ENCODE measurements at regions of chrX and their contacts with region 1.

Region 1: DNA sequence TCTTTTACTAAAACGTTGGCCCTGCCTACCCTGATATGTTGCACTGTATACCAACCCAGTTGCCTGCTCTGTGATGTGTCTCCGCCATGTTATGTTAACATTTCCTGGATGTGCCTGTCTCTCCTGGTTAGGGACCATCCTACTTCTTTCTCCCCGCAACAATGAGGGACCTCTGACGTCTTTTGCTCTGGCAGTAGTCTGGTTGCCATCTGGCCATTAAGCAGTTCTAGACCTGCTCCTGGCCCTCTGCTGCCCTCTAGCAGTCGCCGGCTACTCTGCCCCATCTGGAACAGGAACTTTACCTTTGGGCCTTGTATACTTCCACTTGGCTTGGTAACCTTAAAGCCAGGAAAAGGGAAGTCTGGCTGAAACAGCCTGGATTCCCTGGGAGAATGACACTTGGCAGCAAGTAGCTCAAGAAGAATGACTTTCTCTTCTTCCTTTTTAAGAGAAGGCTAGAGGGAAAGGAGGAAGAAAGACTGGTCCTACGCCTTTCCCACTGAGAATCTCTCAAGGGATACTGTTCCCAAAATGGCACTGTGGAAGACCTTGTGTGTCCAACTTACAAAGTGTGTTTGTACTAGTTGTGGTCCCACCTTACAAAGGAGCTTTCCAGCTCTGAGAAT is 63.5 kb downstream of the GPC3 start:
- DNase-seq: peak; percentile 59 to 63
- H3K4me3 ChIP-seq: no peak overlapping the region
- H3K4me3 Mint-ChIP-seq: no peak overlapping the region
- H3K27ac Mint-ChIP-seq: no peak overlapping the region
- H3K4me1 ChIP-seq: 0 out of 2 replicates have a peak, but pooled peaks cover 4% of the 10 kb centered on the region
- H3K4me1 Mint-ChIP-seq: peaks cover 6% of the 10 kb centered on the region
- H3K27me3 ChIP-seq: no peaks in the 10 kb centered on the region
- H3K27me3 Mint-ChIP-seq: no peaks in the 10 kb centered on the region
- CTCF ChIP-seq: peak; percentile 35 to 59

Region 2: DNA sequence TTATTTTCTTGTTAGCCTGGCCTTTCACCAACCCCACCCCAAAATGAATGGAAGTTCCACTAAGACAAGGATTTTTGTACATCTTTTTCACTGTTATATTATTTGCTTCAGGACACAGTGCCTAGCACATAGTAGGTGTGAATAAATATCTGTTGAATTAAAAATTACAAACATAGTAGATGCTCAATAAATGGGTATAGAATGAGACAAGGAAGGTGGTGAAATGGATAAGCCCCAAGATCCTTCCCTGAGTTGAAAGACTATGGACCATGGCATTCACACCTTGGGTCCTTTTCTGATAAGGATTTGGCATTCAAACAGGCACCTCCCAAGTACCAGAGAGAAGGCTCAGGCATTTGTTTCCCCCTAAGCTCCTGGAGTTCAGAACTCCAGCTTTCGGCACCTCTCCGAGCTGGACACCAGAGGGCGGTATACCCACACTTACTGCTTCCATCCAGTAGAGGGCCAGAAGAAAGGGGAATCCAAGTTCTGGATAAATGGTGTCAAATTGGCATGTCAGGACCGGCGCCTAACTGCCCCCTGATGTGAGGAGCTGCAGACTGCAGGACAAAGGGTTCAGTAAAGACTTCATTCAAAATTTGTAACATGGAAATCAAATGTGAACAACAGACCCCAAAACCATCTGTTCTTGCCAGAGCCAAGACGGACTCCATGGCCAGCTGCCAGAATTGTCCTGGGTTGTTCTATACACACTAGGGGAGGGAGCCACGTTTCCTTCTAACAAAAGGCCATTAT is 129.5 kb before region 1 on chrX:
- CTCF ChIA-PET with region 1: interaction called, 3 read pairs
- POLR2A ChIA-PET with region 1: no interaction called
- intact Hi-C with region 1: loop called (anchors 1 kb)
- DNase-seq: peak; percentile 54 to 68
- H3K4me3 ChIP-seq: no peak overlapping the region
- H3K4me3 Mint-ChIP-seq: no peak overlapping the region
- H3K27ac Mint-ChIP-seq: no peak overlapping the region
- H3K4me1 ChIP-seq: no peaks in the 10 kb centered on the region
- H3K4me1 Mint-ChIP-seq: peaks cover 6% of the 10 kb centered on the region
- H3K27me3 ChIP-seq: no peaks in the 10 kb centered on the region
- H3K27me3 Mint-ChIP-seq: no peaks in the 10 kb centered on the region
- CTCF ChIP-seq: peak; percentile 96 to 98

Region 3: DNA sequence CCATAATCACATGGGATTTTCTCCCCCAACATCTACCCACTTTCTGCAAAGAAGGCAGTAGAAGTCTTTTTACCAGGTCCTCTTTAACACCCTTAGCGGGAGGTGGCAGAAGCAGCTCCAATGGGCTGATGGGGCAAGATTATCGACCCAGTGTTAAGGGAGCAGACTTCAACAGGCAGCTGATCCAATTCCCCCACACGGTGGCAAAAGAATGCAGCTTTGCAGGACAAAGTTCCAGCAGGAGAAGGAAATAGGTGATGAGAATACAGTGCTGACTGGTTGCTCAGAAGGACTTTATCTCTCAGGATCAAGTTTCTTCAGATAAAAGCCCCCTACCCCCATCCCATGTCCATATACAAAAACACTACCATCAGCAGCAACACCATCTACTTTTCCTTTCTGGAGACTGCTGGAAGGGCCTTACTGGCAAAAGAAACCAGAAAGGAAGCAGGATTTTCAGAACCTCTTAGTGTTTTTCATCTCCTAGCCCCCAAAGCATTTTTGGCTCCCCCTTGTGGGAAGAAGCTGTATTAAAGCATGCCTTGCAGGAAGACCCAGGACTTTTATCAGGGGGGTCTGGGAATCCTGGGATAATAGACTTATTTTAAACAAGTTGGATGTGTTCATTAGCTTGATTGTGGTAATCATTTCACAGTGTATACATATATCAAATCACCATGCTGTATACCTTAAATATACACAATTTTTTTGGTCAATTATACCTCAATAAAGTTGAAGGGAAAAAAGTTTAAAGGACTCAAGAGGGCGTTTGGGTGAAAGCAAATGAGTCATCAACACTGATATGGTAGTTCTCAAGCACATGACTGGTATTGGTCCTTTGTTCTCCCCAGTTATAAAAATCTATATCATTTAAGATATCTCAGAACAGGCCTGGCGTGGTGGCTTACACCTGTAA is 82.9 kb before region 1 on chrX:
- CTCF ChIA-PET with region 1: no interaction called
- POLR2A ChIA-PET with region 1: no interaction called
- intact Hi-C with region 1: loop called (anchors 2 kb)
- DNase-seq: peak; percentile 48 to 63
- H3K4me3 ChIP-seq: no peak overlapping the region
- H3K4me3 Mint-ChIP-seq: no peak overlapping the region
- H3K27ac Mint-ChIP-seq: no peak overlapping the region
- H3K4me1 ChIP-seq: no peaks in the 10 kb centered on the region
- H3K4me1 Mint-ChIP-seq: no peaks in the 10 kb centered on the region
- H3K27me3 ChIP-seq: no peaks in the 10 kb centered on the region
- H3K27me3 Mint-ChIP-seq: no peaks in the 10 kb centered on the region
- CTCF ChIP-seq: peak; percentile 41 to 50

Region 4: DNA sequence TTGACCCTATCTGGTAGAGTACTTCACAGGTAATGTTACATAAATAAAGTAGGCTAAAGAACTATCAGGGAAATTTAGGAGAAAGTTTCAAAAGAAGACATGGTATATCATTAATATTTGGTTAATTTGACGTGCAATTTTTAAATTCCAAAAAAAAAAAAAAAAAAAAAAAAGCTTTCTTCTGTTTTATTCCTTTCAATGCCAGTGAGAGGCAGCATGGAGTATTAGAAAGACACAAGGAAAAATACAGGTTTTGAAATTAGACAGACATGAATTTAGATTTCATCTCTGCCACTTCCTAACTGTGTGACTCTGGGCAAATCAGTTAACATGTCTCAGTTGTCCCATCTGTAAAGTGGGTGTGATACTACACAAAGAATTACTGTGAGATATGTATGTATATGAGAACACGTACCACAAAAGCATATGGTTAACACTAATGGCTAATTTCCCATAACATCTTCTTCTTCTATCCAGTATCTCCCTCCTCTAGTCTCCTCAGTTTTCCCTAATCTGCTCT is 69.0 kb before region 1 on chrX:
- CTCF ChIA-PET with region 1: no interaction called
- POLR2A ChIA-PET with region 1: no interaction called
- intact Hi-C with region 1: loop called (anchors 1 kb)
- DNase-seq: no peak
- H3K4me3 ChIP-seq: no peak overlapping the region
- H3K4me3 Mint-ChIP-seq: no peak overlapping the region
- H3K27ac Mint-ChIP-seq: no peak overlapping the region
- H3K4me1 ChIP-seq: no peaks in the 10 kb centered on the region
- H3K4me1 Mint-ChIP-seq: peaks cover 11% of the 10 kb centered on the region
- H3K27me3 ChIP-seq: no peaks in the 10 kb centered on the region
- H3K27me3 Mint-ChIP-seq: no peaks in the 10 kb centered on the region
- CTCF ChIP-seq: no peak

Region 5: GRCh38 chrX:133880032-133880443 is 41.8 kb before region 1 on chrX:
- CTCF ChIA-PET with region 1: no interaction called
- POLR2A ChIA-PET with region 1: no interaction called
- intact Hi-C with region 1: no loop called
- DNase-seq: no peak
- H3K4me3 ChIP-seq: no peak overlapping the region
- H3K4me3 Mint-ChIP-seq: no peak overlapping the region
- H3K27ac Mint-ChIP-seq: no peak overlapping the region
- H3K4me1 ChIP-seq: peaks cover 24% of the 10 kb centered on the region
- H3K4me1 Mint-ChIP-seq: peaks cover 8% of the 10 kb centered on the region
- H3K27me3 ChIP-seq: no peaks in the 10 kb centered on the region
- H3K27me3 Mint-ChIP-seq: no peaks in the 10 kb centered on the region
- CTCF ChIP-seq: no peak

Region 6: GRCh38 chrX:133908223-133908955 is 13.5 kb before region 1 on chrX:
- CTCF ChIA-PET with region 1: no interaction called
- POLR2A ChIA-PET with region 1: no interaction called
- intact Hi-C with region 1: no loop called
- DNase-seq: no peak
- H3K4me3 ChIP-seq: no peak overlapping the region
- H3K4me3 Mint-ChIP-seq: no peak overlapping the region
- H3K27ac Mint-ChIP-seq: no peak overlapping the region
- H3K4me1 ChIP-seq: 0 out of 2 replicates have a peak, but pooled peaks cover 6% of the 10 kb centered on the region
- H3K4me1 Mint-ChIP-seq: peaks cover 12% of the 10 kb centered on the region
- H3K27me3 ChIP-seq: no peaks in the 10 kb centered on the region
- H3K27me3 Mint-ChIP-seq: no peaks in the 10 kb centered on the region
- CTCF ChIP-seq: no peak

Measured in Caco-2 (cell line).